Dorsolateral prefrontal cortex (tissue), 120 donors: ENCODE measurements at regions of chr1 and their contacts with region 1.

Region 1: DNA sequence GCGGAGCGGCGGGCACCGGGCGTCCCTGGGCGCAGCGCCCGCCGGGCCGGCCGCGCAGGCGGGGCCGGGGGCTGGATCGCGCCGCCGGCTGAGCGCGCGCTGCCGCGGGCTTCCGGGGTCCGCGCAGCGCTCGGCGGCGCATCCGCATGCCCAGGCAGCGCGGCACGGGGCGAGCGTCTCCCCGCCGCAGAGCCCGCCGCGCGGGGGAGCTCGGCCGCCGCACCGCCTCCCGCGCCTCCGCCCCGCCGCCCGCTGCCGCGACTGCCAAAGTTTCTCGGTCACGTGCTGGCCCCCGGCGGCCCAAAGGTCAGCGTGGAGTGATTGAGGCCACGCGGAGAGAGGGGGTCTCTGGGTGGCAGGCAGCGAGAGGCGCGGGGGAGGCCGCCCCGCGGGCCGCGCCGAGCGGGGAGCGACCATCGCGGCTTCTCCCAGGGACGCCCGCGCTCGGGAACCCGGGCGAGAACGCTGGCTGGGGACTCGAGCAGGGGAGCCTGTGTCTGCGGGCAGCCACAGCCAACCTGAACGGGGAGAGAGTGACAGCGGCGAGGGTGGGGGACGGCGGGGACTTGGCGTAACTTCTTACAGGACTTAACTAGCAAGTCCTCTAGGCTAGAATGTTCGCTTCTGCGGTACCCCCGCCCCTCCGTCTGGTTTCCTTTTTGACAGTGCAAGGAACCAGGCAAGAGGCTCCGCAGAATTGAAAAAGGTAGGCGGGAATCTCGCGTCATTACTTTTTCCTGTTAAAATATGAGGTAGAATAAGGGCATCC is at the start of gene ILDR2:
- DNase-seq: peak; percentile 50 to 79 (median 67)
- H3K4me3 ChIP-seq: peak within 1 kb of the TSS; percentile 56 to 87 (median 77)
- H3K27ac ChIP-seq: peak within 1 kb of the TSS in 57 of 59 donors; percentile 32 to 90 (median 75)
- H3K27me3 ChIP-seq: no peaks in the 10 kb centered on the region
- CTCF ChIP-seq: peak in 28 of 56 donors; percentile 13 to 61 (median 30)
- total RNA-seq, gene ILDR2: 24.5 to 75.2 (median 44.3) TPM

Region 2: DNA sequence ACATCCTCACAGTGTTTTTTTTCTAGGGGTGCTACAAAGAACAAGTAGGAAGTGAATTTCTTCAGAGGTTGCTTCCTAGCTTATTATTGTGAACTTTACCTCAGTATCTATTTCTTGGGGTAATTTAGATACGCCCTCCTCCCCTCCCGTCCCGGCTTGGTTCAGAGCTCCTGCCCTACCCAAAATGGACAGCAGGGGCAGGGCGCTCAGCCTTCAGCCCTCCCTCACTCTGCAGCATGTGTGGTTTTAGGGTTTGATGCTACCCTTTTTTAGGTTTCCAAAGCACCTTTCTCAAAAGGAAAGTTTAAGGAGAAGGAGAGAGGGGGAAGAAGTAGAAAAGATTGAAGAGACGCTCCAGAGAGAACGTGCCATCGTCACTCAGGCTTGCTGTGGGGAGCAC is 153.2 kb before region 1 on chr1:
- intact Hi-C with region 1: no loop called
- DNase-seq: no peak
- H3K4me3 ChIP-seq: no peak overlapping the region
- H3K27ac ChIP-seq: no peak overlapping the region
- H3K27me3 ChIP-seq: peaks cover 0 to 5% (median 0%) of the 10 kb centered on the region in 45 donors
- CTCF ChIP-seq: peak in 2 of 56 donors; percentile 14 to 23

Region 3: GRCh38 chr1:166838766-166839599 is 136.6 kb before region 1 on chr1 and contains the start of gene POGK:
- intact Hi-C with region 1: loop called in 1 of 2 experiments (anchors 5 kb)
- DNase-seq: peak; percentile 84 to 96 (median 91)
- H3K4me3 ChIP-seq: peak within 1 kb of the TSS; percentile 58 to 88 (median 76)
- H3K27ac ChIP-seq: peak within 1 kb of the TSS; percentile 75 to 99 (median 96)
- H3K27me3 ChIP-seq: no peaks in the 10 kb centered on the region
- CTCF ChIP-seq: peak in 34 of 56 donors; percentile 17 to 60 (median 34)
- total RNA-seq, gene POGK: 37.1 to 98.5 (median 49.7) TPM

Region 4: DNA sequence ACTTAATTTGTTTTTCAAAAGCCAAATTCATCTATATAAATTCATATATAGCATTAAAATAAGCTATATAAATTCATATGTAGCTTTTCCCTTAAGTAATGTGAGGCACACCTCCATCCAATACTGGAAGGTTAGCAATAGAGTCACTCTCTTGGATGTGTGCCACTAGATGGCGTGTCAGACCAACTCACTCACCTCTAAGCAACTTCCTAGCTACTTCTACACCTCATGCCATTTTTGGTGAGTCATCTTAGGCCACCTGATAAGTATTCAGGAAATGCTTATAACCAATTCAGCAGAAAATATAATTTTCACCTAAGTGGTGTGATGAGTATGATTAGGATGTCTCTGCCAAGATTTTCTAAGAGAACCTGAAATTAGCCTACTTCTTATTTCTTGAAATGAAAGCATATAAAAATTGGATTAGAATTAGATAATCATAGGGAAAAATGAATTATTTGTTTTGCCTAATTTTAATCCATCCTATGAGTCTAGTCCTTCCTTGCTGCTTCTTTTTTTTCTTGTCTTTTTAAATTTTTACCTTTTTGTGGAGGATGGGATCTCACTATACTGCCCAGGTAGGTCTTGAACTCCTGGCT is 65.0 kb before region 1 on chr1:
- intact Hi-C with region 1: loop called (anchors 5 to 10 kb)
- DNase-seq: peak in 9 of 10 donors; percentile 31 to 81 (median 65)
- H3K4me3 ChIP-seq: no peak overlapping the region
- H3K27ac ChIP-seq: no peak overlapping the region
- H3K27me3 ChIP-seq: no peaks in the 10 kb centered on the region
- CTCF ChIP-seq: peak; percentile 37 to 97 (median 82)

Region 5: DNA sequence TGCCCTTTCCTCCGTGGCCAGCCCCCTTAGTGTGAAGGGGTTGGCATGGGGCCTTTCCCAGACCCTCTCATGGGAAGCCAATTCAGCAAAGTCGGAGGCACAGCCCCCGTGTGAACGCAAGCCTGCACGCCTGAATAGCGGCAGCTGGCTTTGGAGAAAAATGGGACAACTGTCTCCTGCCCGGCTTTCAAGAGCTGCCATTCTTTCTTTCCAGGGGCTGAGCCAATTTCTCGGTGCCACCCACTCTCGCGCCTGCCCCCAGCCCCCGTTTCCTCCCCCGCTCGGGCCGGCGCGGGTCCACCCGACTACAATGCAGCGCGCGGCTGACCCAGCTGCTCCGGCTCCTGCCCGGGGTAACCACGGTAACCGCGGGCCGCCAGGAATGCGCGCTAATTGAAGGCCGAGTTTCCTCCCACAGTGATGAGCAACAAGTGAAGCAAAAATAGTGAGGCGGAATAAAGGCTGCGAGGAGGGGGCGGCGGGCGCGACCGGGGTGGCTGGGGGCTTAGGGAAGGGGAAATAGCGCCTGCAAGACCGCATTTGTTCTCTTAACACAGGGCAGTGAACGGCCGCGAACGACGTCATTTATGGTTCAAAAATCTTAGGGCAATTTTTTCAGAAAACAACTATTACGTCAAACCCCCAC is 28.0 kb before region 1 on chr1:
- intact Hi-C with region 1: loop called (anchors 1 to 2 kb)
- DNase-seq: peak; percentile 57 to 92 (median 88)
- H3K4me3 ChIP-seq: peak overlapping the region; percentile 12 to 66 (median 50)
- H3K27ac ChIP-seq: peak overlapping the region; percentile 66 to 98 (median 93)
- H3K27me3 ChIP-seq: no peaks in the 10 kb centered on the region
- CTCF ChIP-seq: peak in 15 of 56 donors; percentile 6 to 47 (median 25)

Region 6: GRCh38 chr1:167059045-167059808 is 83.7 kb after region 1 on chr1:
- intact Hi-C with region 1: loop called (anchors 5 to 10 kb)
- DNase-seq: peak in 9 of 10 donors; percentile 53 to 86 (median 80)
- H3K4me3 ChIP-seq: peak overlapping the region in 13 of 59 donors; percentile 3 to 40 (median 17)
- H3K27ac ChIP-seq: peak overlapping the region in 2 of 59 donors; percentile 0 to 27
- H3K27me3 ChIP-seq: peaks cover 0 to 4% (median 0%) of the 10 kb centered on the region in 45 donors
- CTCF ChIP-seq: peak; percentile 89 to 100 (median 98)

Region 7: GRCh38 chr1:167553136-167554027 is 577.8 kb after region 1 on chr1 and contains the start of gene CREG1:
- intact Hi-C with region 1: loop called in 1 of 2 experiments (anchors 5 kb)
- DNase-seq: peak; percentile 88 to 96 (median 93)
- H3K4me3 ChIP-seq: peak within 1 kb of the TSS; percentile 61 to 93 (median 85)
- H3K27ac ChIP-seq: peak within 1 kb of the TSS; percentile 2 to 93 (median 80)
- H3K27me3 ChIP-seq: no peaks in the 10 kb centered on the region
- CTCF ChIP-seq: peak in 34 of 56 donors; percentile 4 to 64 (median 29)
- total RNA-seq, gene CREG1: 21.6 to 57.2 (median 42.1) TPM